ENCODE measurements at regions of chr6 and their contacts with region 1.

Region 1: DNA sequence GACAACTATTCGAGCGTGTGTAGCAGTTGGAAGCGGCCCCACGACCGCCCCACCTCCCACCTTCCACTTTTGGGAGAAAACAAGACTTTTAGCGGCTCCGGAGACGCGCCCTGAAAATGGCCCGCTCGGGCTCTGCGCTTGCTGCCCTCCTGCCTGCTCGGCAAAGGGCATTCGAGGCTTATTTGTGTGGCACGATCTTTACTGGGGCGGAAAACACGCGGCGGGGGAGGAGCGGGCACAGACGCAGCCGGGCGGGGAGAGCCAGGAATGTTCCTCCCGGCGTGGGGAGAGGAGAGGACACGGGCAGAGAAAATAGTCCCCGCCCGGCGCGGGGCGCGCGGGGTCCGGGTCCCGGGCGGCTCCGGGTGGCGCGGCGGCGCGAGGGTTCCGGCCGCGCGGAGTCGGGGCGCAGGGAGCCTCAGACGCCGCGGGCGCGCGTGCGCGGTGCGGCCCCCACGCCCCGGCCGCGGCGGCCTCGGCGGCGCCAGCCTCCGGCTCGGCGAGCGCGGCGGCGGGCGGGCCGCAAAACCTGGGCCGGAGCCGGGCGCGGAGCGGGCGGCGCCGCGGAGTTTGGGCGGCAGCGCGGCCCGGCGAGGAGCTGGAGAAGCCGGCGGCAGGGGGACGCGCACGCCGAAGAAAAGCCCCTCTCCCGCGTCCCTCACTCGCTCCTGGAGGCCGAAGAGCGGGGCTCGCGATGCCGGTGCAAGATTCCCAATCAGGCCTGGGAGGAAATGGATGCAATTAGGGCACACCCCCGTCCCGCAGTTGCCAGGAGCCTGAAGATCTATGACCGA is 90.0 kb upstream of the ARID1B start:
- DNase-seq: peak; percentile 77
- H3K4me3 ChIP-seq: peak overlapping the region; percentile 70 to 94 (median 83)
- H3K27ac ChIP-seq: peak overlapping the region; percentile 84
- H3K4me1 ChIP-seq: peaks cover 14% of the 10 kb centered on the region
- H3K27me3 ChIP-seq: no peaks in the 10 kb centered on the region
- CTCF ChIP-seq: no peak

Region 2: GRCh38 chr6:156410649-156411048 is 276.5 kb before region 1 on chr6:
- CTCF ChIA-PET with region 1: no interaction called
- dilution Hi-C with region 1: no loop called
- in situ Hi-C with region 1: no loop called
- intact Hi-C with region 1: no loop called
- DNase-seq: no peak
- H3K4me3 ChIP-seq: no peak overlapping the region
- H3K27ac ChIP-seq: no peak overlapping the region
- H3K4me1 ChIP-seq: no peaks in the 10 kb centered on the region
- H3K27me3 ChIP-seq: no peaks in the 10 kb centered on the region
- CTCF ChIP-seq: peak in 1 of 2 donors; percentile 18

Region 3: GRCh38 chr6:156564127-156564806 is 122.9 kb before region 1 on chr6:
- CTCF ChIA-PET with region 1: no interaction called
- dilution Hi-C with region 1: no loop called
- in situ Hi-C with region 1: no loop called
- intact Hi-C with region 1: loop called (anchors 1 kb)
- DNase-seq: peak; percentile 36
- H3K4me3 ChIP-seq: no peak overlapping the region
- H3K27ac ChIP-seq: no peak overlapping the region
- H3K4me1 ChIP-seq: no peaks in the 10 kb centered on the region
- H3K27me3 ChIP-seq: no peaks in the 10 kb centered on the region
- CTCF ChIP-seq: peak; percentile 87 to 96

Region 4: GRCh38 chr6:156719720-156720563 is 32.8 kb after region 1 on chr6:
- CTCF ChIA-PET with region 1: no interaction called
- dilution Hi-C with region 1: no loop called
- in situ Hi-C with region 1: no loop called
- intact Hi-C with region 1: loop called (anchors 1 kb)
- DNase-seq: peak; percentile 93
- H3K4me3 ChIP-seq: peak overlapping the region in 2 of 3 experiments; percentile 9 to 31
- H3K27ac ChIP-seq: peak overlapping the region; percentile 76
- H3K4me1 ChIP-seq: peaks cover 30% of the 10 kb centered on the region
- H3K27me3 ChIP-seq: no peaks in the 10 kb centered on the region
- CTCF ChIP-seq: no peak

Region 5: GRCh38 chr6:156767603-156768467 is 80.6 kb after region 1 on chr6:
- CTCF ChIA-PET with region 1: no interaction called
- dilution Hi-C with region 1: no loop called
- in situ Hi-C with region 1: loop called in 1 of 2 experiments (anchors 10 kb)
- intact Hi-C with region 1: no loop called
- DNase-seq: no peak
- H3K4me3 ChIP-seq: no peak overlapping the region
- H3K27ac ChIP-seq: no peak overlapping the region
- H3K4me1 ChIP-seq: no peaks in the 10 kb centered on the region
- H3K27me3 ChIP-seq: no peaks in the 10 kb centered on the region
- CTCF ChIP-seq: no peak

Region 6: GRCh38 chr6:156953479-156954146 is 266.4 kb after region 1 on chr6:
- CTCF ChIA-PET with region 1: no interaction called
- dilution Hi-C with region 1: no loop called
- in situ Hi-C with region 1: no loop called
- intact Hi-C with region 1: loop called (anchors 1 kb)
- DNase-seq: peak; percentile 96
- H3K4me3 ChIP-seq: peak overlapping the region in 1 of 3 experiments; percentile 20
- H3K27ac ChIP-seq: peak overlapping the region; percentile 97
- H3K4me1 ChIP-seq: peaks cover 48% of the 10 kb centered on the region
- H3K27me3 ChIP-seq: no peaks in the 10 kb centered on the region
- CTCF ChIP-seq: peak; percentile 5 to 42

Measured in mammary epithelial cell (primary cell).